ENCODE measurements at regions of chr16 and their contacts with region 1.

Region 1: DNA sequence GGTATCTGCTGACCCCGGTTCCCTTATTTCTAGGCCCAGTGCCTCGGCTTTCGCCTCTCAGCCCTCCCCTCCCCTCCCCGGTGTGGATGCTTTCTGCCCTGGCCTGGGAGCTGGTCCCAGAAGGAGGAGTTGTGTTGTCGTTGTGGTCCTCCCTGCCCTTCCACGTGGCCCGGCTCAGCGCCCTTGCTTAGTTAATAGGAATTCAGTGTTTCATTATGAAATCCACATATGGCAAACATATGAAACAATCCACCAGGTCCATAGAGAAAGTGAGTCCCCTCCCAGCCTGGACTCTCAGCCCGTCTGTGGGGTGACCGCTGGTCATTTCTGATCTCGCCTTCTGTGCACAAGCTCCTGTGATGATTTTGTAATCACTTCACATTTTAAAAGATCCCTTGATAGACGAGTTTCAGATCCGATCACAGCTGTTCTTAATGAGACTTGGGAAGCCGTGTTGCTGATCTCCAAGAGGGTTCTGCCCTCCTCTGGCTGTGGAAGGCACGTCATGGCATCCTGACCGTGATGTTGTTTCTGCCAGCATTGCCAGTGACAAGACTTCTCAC is 112.1 kb downstream of the BANP start:
- DNase-seq: no peak
- H3K4me3 ChIP-seq: no peak overlapping the region
- H3K27ac ChIP-seq: no peak overlapping the region
- H3K4me1 ChIP-seq: no peaks in the 10 kb centered on the region
- H3K27me3 ChIP-seq: no peaks in the 10 kb centered on the region
- CTCF ChIP-seq: no peak
- POLR2A ChIP-seq: no peak

Region 2: GRCh38 chr16:87982491-87983415 is 80.5 kb before region 1 on chr16:
- intact Hi-C with region 1: loop called (anchors 10 kb)
- DNase-seq: no peak
- H3K4me3 ChIP-seq: no peak overlapping the region
- H3K27ac ChIP-seq: no peak overlapping the region
- H3K4me1 ChIP-seq: no peaks in the 10 kb centered on the region
- H3K27me3 ChIP-seq: no peaks in the 10 kb centered on the region
- CTCF ChIP-seq: no peak
- POLR2A ChIP-seq: no peak